Dendritic cell treated with granulocyte-macrophage colony-stimulating factor and Interleukin-4, amounts not matched to agents 40 ng/mL and 50 ng/mL, for 4 days (primary cell): ENCODE measurements at regions of chr5 and their contacts with region 1.

Region 1: GRCh38 chr5:134140530-134141201 is 26.2 kb downstream of the TCF7 start:
- H3K4me3 Mint-ChIP-seq: no peak overlapping the region
- H3K27ac Mint-ChIP-seq: no peak overlapping the region
- H3K4me1 Mint-ChIP-seq: peaks cover 9% of the 10 kb centered on the region
- H3K27me3 Mint-ChIP-seq: no peaks in the 10 kb centered on the region

Region 2: GRCh38 chr5:134041570-134042411 is 98.9 kb before region 1 on chr5:
- intact Hi-C with region 1: loop called (anchors 1 kb)
- H3K4me3 Mint-ChIP-seq: no peak overlapping the region
- H3K27ac Mint-ChIP-seq: no peak overlapping the region
- H3K4me1 Mint-ChIP-seq: no peaks in the 10 kb centered on the region
- H3K27me3 Mint-ChIP-seq: peaks cover 5% of the 10 kb centered on the region

Region 3: GRCh38 chr5:134101686-134102439 is 38.8 kb before region 1 on chr5:
- intact Hi-C with region 1: loop called (anchors 1 kb)
- H3K4me3 Mint-ChIP-seq: no peak overlapping the region
- H3K27ac Mint-ChIP-seq: no peak overlapping the region
- H3K4me1 Mint-ChIP-seq: no peaks in the 10 kb centered on the region
- H3K27me3 Mint-ChIP-seq: peaks cover 6% of the 10 kb centered on the region

Region 4: DNA sequence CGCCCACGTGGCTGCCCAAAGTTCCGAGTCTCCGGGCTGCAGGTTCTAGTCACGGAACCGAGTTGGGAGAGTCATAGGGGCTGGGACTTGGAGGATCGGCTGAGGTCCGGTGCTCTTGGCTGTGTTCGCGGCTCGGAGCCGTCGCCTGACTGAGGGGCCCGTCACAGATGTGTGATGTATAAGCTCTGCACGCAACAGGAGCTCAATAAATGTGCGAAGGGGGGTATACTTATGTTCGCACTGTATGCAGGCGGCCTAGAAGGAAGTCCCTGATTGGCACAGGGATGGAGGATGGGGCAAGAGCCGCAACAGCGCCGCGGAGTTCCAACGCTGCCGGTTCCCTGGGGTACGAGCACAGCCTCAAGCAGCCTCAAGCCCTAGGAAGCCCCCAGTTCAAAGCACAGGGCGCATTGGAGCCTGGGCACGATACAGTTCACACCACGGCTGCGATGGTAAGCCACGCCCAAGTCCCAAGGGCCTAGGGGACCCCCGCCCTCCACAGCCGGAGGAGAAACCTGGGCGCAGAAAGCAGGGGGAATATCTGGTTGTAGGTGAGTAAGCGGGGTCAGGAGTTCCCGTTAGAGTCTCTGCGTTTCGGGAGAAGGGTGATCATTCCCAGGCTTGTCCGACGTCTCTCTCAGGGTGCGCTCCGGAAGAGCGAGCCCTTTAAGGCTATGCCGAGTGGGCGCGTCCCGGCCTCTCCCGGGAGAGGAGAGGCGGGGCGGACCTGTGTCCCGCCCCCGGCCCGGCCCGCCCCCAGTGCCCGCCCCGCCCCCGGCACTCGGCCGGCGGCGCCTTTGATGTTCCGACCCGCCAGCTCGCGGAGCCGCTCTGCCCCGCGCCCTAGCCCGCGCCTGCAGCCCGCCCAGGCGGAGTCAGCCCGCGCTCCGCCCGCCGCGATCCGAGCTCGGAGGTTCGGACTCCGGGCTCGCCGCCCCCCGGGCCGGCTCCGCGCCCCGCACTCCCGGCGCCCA is 26.5 kb before region 1 on chr5 and contains the start of gene TCF7:
- intact Hi-C with region 1: no loop called
- H3K4me3 Mint-ChIP-seq: peak within 1 kb of the TSS; percentile 75
- H3K27ac Mint-ChIP-seq: peak within 1 kb of the TSS; percentile 47
- H3K4me1 Mint-ChIP-seq: peaks cover 14% of the 10 kb centered on the region
- H3K27me3 Mint-ChIP-seq: peaks cover 78% of the 10 kb centered on the region